ENCODE measurements at regions of chr1 and their contacts with region 1.

Region 1: GRCh38 chr1:98051065-98051675 is 130.3 kb upstream of the DPYD start:
- DNase-seq: peak; percentile 17 to 51 (median 28)
- ATAC-seq: peak; percentile 54; the same call in 1 of the 3 replicates
- H3K4me3 ChIP-seq: no peak overlapping the region
- H3K27ac ChIP-seq: no peak overlapping the region
- H3K4me1 ChIP-seq: peaks cover 0 to 11% of the 10 kb centered on the region in 2 experiments; a peak in 1 of 5 replicates
- H3K27me3 ChIP-seq: no peaks in the 10 kb centered on the region
- CTCF ChIP-seq: peak; percentile 48 to 71 (median 66)
- EP300 ChIP-seq: no peak
- POLR2A ChIP-seq: no peak
- RAD21 ChIP-seq: peak; percentile 64 to 78

Region 2: DNA sequence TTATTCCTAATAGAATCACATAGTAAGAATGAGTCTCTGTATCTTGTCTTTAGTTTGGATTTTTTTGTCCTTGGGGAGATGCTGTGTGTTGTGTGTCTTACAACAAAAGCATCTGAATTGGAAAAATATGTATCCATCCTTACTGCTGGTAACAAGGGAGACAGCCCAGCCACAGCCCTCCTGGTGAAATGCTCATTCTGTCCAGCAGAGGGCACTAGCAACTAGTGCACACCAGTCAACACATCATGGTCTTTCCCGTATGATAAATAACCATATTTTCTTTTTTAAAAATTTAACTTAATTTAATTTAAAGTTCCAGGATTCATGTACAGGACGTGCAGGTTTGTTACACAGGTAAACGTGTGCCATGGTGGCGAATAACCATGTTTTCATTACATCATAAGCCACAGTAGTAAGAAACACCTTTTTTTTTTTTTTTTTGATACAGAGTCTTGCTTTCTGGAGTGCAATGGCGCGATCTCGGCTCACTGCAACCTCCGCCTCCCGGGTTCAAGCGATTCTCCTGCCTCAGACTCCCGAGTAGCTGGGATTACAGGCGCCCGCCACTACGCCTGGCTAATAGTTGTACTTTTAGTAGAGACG is 1084.5 kb before region 1 on chr1:
- CTCF ChIA-PET with region 1: interaction called, 7 read pairs
- POLR2A ChIA-PET with region 1: no interaction called
- in situ Hi-C with region 1: no loop called
- intact Hi-C with region 1: loop called (anchors 1 kb)
- DNase-seq: peak; percentile 44 to 68 (median 66)
- ATAC-seq: peak; percentile 86
- H3K4me3 ChIP-seq: no peak overlapping the region
- H3K27ac ChIP-seq: no peak overlapping the region
- H3K4me1 ChIP-seq: no peaks in the 10 kb centered on the region
- H3K27me3 ChIP-seq: no peaks in the 10 kb centered on the region
- CTCF ChIP-seq: peak; percentile 58 to 73 (median 73)
- EP300 ChIP-seq: no peak
- POLR2A ChIP-seq: no peak
- RAD21 ChIP-seq: peak; percentile 55 to 63

Region 3: DNA sequence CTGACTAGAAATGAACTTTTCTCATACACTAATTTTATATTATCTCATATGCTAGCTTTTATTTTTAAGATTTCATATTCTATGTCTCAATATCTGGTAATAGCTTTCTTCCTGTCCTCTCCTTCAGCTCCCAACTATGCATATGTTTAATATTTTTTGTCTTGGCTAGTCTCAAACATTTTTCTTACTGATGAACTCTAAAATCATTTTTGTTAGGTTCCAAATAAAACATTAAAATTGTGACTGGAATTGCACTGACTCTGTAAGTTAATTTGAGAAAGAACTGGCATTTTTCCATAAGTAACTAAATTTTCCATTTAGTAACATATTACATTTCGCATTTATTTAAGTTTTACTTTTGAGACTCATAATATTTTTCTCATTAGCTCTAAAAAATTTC is 238.1 kb after region 1 on chr1:
- CTCF ChIA-PET with region 1: no interaction called
- POLR2A ChIA-PET with region 1: no interaction called
- in situ Hi-C with region 1: no loop called
- intact Hi-C with region 1: no loop called
- DNase-seq: no peak
- ATAC-seq: no peak
- H3K4me3 ChIP-seq: no peak overlapping the region
- H3K27ac ChIP-seq: no peak overlapping the region
- H3K4me1 ChIP-seq: no peaks in the 10 kb centered on the region
- H3K27me3 ChIP-seq: no peaks in the 10 kb centered on the region
- CTCF ChIP-seq: no peak
- EP300 ChIP-seq: no peak
- POLR2A ChIP-seq: no peak
- RAD21 ChIP-seq: no peak

Region 4: GRCh38 chr1:98546319-98546718 is 495.1 kb after region 1 on chr1:
- CTCF ChIA-PET with region 1: no interaction called
- POLR2A ChIA-PET with region 1: no interaction called
- in situ Hi-C with region 1: no loop called
- intact Hi-C with region 1: no loop called
- DNase-seq: no peak
- ATAC-seq: no peak
- H3K4me3 ChIP-seq: no peak overlapping the region
- H3K27ac ChIP-seq: no peak overlapping the region
- H3K4me1 ChIP-seq: no peaks in the 10 kb centered on the region
- H3K27me3 ChIP-seq: no peaks in the 10 kb centered on the region
- CTCF ChIP-seq: no peak
- EP300 ChIP-seq: no peak
- POLR2A ChIP-seq: no peak
- RAD21 ChIP-seq: no peak